ENCODE measurements at regions of chr9 and their contacts with region 1.

Region 1: DNA sequence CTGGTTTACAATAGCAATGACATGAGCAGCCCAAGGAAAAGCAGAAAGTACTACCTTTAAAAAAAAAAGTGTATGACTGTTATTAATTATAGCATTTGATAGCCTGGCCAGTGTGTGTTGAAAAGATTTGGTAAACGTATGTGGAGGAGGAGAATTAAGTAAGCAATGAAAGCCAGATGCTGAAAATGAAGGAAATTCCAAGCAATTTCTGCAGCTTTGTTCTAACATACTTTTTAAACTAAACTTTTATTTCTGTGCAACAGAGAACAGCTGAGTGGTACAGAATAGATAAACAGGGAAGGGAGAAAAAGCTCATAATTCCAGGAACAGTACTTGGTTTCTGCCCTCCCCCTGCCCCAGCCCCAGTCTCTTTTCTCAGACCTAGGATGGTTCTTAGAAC is 252.6 kb downstream of the ADAMTSL1 start:
- DNase-seq: no peak
- H3K4me3 ChIP-seq: no peak overlapping the region
- H3K27ac ChIP-seq: peak overlapping the region in 3 of 4 donors; percentile 41 to 67 (median 62)
- H3K4me1 ChIP-seq: peaks cover 0 to 29% (median 24%) of the 10 kb centered on the region in 4 donors
- H3K27me3 ChIP-seq: no peaks in the 10 kb centered on the region
- CTCF ChIP-seq: no peak
- EP300 ChIP-seq: no peak
- POLR2A ChIP-seq: no peak

Region 2: DNA sequence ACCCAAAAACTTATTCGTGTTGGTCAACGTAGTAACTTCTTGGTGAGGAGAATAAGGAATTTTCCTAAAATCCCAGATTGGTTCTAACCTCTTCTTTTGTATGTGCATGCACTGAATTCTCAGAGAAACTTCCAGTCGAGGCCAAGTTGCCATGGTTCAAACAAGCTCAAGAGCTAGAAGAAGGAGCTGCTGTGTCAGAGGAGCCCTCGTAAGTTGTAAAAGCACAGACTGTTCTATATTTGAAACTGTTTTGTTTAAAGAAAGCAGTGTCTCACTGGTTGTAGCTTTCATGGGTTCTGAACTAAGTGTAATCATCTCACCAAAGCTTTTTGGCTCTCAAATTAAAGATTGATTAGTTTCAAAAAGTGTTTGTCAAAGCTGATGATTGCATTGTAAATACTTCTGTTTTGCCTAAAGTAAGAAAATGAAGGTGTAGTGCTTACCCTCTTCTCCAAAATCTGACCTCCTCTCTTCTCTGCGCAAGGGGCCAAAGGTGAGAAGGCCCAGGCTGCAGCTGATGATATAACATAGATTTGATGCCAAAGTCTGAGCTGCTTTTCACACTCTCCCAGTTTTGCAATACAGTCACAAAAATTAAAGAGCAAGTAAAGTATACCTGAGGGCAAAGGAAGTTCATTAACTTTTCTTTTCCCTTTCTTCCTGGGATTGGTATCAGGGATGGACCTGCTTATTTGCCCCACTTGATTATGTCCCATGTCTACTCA is 41.8 kb before region 1 on chr9:
- intact Hi-C with region 1: loop called (anchors 2 kb)
- DNase-seq: peak; percentile 79
- H3K4me3 ChIP-seq: no peak overlapping the region
- H3K27ac ChIP-seq: peak overlapping the region; percentile 68 to 76 (median 72)
- H3K4me1 ChIP-seq: peaks cover 0 to 32% (median 20%) of the 10 kb centered on the region in 4 donors
- H3K27me3 ChIP-seq: no peaks in the 10 kb centered on the region
- CTCF ChIP-seq: no peak
- EP300 ChIP-seq: peak in 1 of 4 donors; percentile 51
- POLR2A ChIP-seq: no peak

Region 3: DNA sequence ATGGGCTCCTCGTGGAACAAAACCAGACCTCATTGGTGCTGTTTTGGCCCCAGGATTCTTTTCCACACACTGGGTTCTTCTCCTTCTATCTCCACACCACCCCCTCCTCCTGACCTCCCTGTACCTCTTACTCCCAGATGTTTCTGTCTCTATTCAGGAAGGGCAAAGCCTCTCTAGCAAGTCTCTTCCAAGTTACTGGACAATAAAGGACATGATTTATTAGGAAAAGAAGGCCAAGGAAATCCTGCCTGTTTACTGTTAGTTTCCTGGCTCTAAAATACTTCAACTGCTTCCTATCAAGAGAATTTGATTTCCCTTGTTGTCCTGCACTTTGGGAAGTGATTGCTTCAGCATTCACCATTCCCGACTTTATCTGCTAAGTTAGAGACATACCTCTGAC is 44.5 kb after region 1 on chr9:
- intact Hi-C with region 1: loop called (anchors 5 kb)
- DNase-seq: no peak
- H3K4me3 ChIP-seq: no peak overlapping the region
- H3K27ac ChIP-seq: peak overlapping the region in 2 of 4 donors; percentile 47 to 56
- H3K4me1 ChIP-seq: peaks cover 0 to 33% (median 27%) of the 10 kb centered on the region in 4 donors
- H3K27me3 ChIP-seq: no peaks in the 10 kb centered on the region
- CTCF ChIP-seq: no peak
- EP300 ChIP-seq: no peak
- POLR2A ChIP-seq: no peak

Region 4: DNA sequence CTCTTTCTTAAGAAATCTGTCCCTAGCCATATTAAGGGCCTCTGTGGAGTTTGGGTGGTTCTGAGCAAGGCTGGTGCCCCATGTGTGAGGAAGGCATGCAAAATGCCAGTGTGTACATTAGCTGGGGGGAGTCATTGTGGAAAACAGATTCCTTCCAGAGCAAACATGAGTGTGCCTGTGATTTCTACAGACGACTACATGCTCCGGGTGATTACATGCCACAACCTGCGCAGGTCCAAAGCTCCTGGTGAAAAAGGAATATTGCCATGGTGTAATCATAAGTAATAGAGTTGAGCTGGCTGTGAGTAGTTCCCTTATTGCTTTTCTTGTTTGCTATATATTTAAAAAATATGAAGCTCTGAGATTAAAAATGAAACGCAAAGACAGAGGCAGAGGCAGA is 784.4 kb after region 1 on chr9:
- intact Hi-C with region 1: no loop called
- DNase-seq: no peak
- H3K4me3 ChIP-seq: no peak overlapping the region
- H3K27ac ChIP-seq: no peak overlapping the region
- H3K4me1 ChIP-seq: no peaks in the 10 kb centered on the region
- H3K27me3 ChIP-seq: no peaks in the 10 kb centered on the region
- CTCF ChIP-seq: no peak
- EP300 ChIP-seq: no peak
- POLR2A ChIP-seq: no peak

Measured in sigmoid colon (tissue), 7 donors.